ENCODE measurements at regions of chr3 and their contacts with region 1.

Region 1: GRCh38 chr3:88149509-88150362 is at the start of gene C3orf38:
- DNase-seq: peak; percentile 95
- H3K4me3 ChIP-seq: peak within 1 kb of the TSS; percentile 71 to 83 (median 76)
- H3K27ac ChIP-seq: peak within 1 kb of the TSS; percentile 89 to 94 (median 92)
- H3K4me1 ChIP-seq: peaks cover 19 to 45% (median 36%) of the 10 kb centered on the region in 4 donors
- H3K27me3 ChIP-seq: no peaks in the 10 kb centered on the region
- CTCF ChIP-seq: no peak
- EP300 ChIP-seq: no peak
- POLR2A ChIP-seq: no peak
- total RNA-seq, gene C3orf38: 13.9 to 18.9 (median 16.4) TPM

Region 2: DNA sequence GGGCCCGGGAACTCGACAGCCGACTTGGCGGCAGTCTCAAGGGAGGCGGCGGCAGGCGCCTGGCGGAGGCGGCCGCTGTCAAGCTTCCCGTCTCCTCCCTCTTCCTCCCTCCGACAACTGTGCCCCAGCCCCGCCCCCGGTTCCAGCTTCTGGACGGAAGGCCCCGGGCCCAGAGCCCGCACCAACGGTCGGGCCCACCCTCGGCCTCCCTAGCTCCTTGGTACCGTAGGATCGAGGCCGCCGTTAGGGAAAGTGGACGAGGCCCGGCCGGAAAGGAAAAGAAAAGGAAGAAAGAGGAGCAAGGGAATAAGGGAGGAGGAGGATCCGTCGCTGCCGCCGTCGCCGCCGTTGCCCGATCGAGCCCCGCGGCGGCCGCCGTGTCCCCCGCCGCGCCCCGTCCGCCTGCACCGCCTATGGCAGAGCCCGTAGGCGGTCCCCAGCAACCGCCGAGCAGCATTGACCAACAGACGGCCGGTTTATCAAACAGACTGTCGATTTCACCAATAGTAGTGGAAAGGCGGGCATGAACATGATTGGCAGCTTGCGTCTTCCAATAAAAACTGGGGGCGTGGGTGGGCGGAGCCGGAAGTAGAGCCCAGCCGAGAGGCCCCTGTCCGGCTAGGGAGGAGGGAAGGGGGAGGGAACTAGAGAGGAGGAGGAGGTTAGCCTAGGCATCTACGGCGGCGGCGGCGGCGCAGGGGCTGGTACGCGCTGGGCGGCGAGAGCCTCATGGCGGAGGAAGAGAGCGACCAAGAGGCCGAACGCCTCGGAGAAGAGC is 91.0 kb before region 1 on chr3 and contains the starts of genes CGGBP1 and ZNF654:
- intact Hi-C with region 1: loop called (anchors 5 kb)
- DNase-seq: peak; percentile 100
- H3K4me3 ChIP-seq: peak within 1 kb of the TSS; percentile 89 to 94 (median 92)
- H3K27ac ChIP-seq: peak within 1 kb of the TSS; percentile 93 to 97 (median 94)
- H3K4me1 ChIP-seq: peaks cover 29 to 55% (median 52%) of the 10 kb centered on the region in 4 donors
- H3K27me3 ChIP-seq: no peaks in the 10 kb centered on the region
- CTCF ChIP-seq: no peak
- EP300 ChIP-seq: no peak
- POLR2A ChIP-seq: peak; percentile 80
- total RNA-seq, gene CGGBP1: 52.0 to 77.2 (median 58.7) TPM
- total RNA-seq, gene ZNF654: 11.8 to 17.9 (median 16.0) TPM

Region 3: GRCh38 chr3:88462230-88462629 is 312.5 kb after region 1 on chr3:
- intact Hi-C with region 1: no loop called
- DNase-seq: no peak
- H3K4me3 ChIP-seq: no peak overlapping the region
- H3K27ac ChIP-seq: no peak overlapping the region
- H3K4me1 ChIP-seq: no peaks in the 10 kb centered on the region
- H3K27me3 ChIP-seq: no peaks in the 10 kb centered on the region
- CTCF ChIP-seq: no peak
- EP300 ChIP-seq: no peak
- POLR2A ChIP-seq: no peak